ENCODE measurements at regions of chr22 and their contacts with region 1.

Region 1: GRCh38 chr22:26953012-26953883 is 295.9 kb downstream of the MIAT start:
- DNase-seq: peak; percentile 55
- H3K4me3 ChIP-seq: no peak overlapping the region; a peak in 1 of 4 replicates
- H3K27ac ChIP-seq: peak overlapping the region in 1 of 2 experiments; percentile 80; a peak in 1 of 4 replicates
- H3K4me1 ChIP-seq: peaks cover 0 to 19% of the 10 kb centered on the region in 2 experiments; a peak in 2 of 4 replicates
- H3K27me3 ChIP-seq: peaks cover 26% of the 10 kb centered on the region
- CTCF ChIP-seq: no peak
- EP300 ChIP-seq: no peak
- RAD21 ChIP-seq: no peak

Region 2: GRCh38 chr22:26941896-26942636 is 11.2 kb before region 1 on chr22:
- CTCF ChIA-PET with region 1: interaction called, 12 read pairs
- POLR2A ChIA-PET with region 1: no interaction called
- DNase-seq: no peak
- H3K4me3 ChIP-seq: no peak overlapping the region
- H3K27ac ChIP-seq: peak overlapping the region in 1 of 2 experiments; percentile 86; a peak in 2 of 4 replicates
- H3K4me1 ChIP-seq: peaks cover 0 to 27% of the 10 kb centered on the region in 2 experiments; a peak in 2 of 4 replicates
- H3K27me3 ChIP-seq: no peaks in the 10 kb centered on the region
- CTCF ChIP-seq: no peak
- EP300 ChIP-seq: no peak
- RAD21 ChIP-seq: no peak

Region 3: DNA sequence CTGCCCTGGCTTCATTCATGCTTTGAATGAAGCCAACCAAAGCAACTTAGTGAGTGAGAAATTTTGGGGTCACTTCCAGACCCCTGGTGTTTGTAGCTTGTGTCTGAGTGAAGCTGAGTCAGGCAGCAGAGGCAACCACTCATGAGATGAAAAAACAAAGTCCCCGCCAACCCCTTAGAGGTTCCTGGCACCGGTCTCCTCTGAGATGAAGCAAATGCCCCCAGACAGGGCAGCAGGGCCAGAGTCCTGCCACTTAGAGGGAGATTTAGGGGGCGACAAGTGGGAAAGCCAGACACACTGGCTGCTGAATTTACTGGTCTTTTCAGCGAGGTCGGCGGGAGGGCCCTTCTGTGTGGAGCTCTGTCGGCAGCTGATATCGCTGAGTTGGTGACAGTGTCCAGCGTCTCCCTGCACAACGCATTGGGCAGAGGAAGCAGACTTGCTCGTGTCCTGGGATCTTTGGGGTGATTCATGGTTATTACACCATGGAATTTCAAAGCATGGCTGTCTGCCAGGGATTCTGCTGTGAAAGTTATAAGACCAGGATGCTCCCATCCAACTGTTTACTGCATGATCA is 186.8 kb after region 1 on chr22:
- CTCF ChIA-PET with region 1: no interaction called
- POLR2A ChIA-PET with region 1: no interaction called
- DNase-seq: peak; percentile 62
- H3K4me3 ChIP-seq: peak overlapping the region in 1 of 2 experiments; percentile 19; a peak in 1 of 4 replicates
- H3K27ac ChIP-seq: peak overlapping the region; percentile 47 to 58; a peak in 2 of 4 replicates
- H3K4me1 ChIP-seq: peaks cover 6 to 10% of the 10 kb centered on the region in 2 experiments; a peak in 2 of 4 replicates
- H3K27me3 ChIP-seq: no peaks in the 10 kb centered on the region; the same call in 1 of the 2 replicates
- CTCF ChIP-seq: no peak
- EP300 ChIP-seq: no peak
- RAD21 ChIP-seq: no peak